ENCODE measurements at regions of chr10 and their contacts with region 1.

Region 1: GRCh38 chr10:73772280-73773151 is 9.3 kb upstream of the CHCHD1 start:
- DNase-seq: peak; percentile 61 to 95 (median 76)
- ATAC-seq: peak; percentile 71
- H3K4me3 ChIP-seq: peak overlapping the region; percentile 90
- H3K4me3 Mint-ChIP-seq: peak overlapping the region; percentile 96
- H3K27ac ChIP-seq: peak overlapping the region; percentile 91 to 92
- H3K27ac Mint-ChIP-seq: peak overlapping the region; percentile 97
- H3K4me1 ChIP-seq: peaks cover 49% of the 10 kb centered on the region
- H3K4me1 Mint-ChIP-seq: peaks cover 74% of the 10 kb centered on the region
- H3K27me3 ChIP-seq: no peaks in the 10 kb centered on the region
- H3K27me3 Mint-ChIP-seq: no peaks in the 10 kb centered on the region
- CTCF ChIP-seq: no peak

Region 2: DNA sequence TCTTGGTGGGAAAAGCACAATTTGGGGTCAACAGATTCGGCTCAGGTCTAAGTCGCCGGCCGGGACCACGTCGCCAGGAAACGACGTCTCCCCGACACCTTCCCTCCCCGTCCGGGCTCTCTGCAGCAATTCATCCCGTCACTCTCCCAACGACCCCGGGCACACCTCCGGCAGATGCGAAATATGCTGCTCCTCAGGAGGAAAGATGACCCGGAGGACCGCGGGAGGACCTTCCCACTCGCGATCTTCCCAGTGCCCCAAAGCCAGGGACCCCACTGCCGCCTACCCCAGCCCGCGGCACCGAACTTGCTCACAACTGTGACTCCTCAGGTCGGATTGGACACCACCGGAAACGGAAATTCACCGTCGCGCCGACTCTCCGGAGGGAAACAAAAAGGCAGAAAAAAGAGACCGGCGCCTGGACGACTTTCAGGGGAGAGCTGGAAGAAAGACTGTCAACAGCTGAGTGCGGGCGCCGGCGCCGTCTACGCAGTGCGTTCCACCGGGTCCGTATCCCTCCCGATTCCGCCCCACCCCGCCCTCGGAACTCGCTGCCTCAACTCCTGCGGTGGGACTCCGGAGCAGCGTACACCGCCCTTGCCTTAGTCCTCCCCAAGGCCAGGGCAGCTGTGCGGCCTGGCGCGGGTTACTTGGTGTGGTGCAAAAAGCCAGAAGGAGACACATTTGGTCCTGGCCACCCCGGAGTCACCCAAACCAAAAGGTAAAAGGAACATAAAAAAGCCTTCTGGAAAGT is 42.2 kb before region 1 on chr10:
- CTCF ChIA-PET with region 1: interaction called, 3 read pairs
- POLR2A ChIA-PET with region 1: interaction called, 33 read pairs
- intact Hi-C with region 1: no loop called
- DNase-seq: peak; percentile 78 to 94 (median 90)
- ATAC-seq: peak; percentile 90
- H3K4me3 ChIP-seq: peak overlapping the region; percentile 87
- H3K4me3 Mint-ChIP-seq: peak overlapping the region; percentile 98
- H3K27ac ChIP-seq: peak overlapping the region; percentile 77 to 86
- H3K27ac Mint-ChIP-seq: peak overlapping the region; percentile 94
- H3K4me1 ChIP-seq: peaks cover 27% of the 10 kb centered on the region
- H3K4me1 Mint-ChIP-seq: peaks cover 31% of the 10 kb centered on the region
- H3K27me3 ChIP-seq: no peaks in the 10 kb centered on the region
- H3K27me3 Mint-ChIP-seq: no peaks in the 10 kb centered on the region
- CTCF ChIP-seq: no peak

Region 3: GRCh38 chr10:73759512-73760115 is 12.9 kb before region 1 on chr10:
- CTCF ChIA-PET with region 1: interaction called, 18 read pairs
- POLR2A ChIA-PET with region 1: interaction called, 11 read pairs
- intact Hi-C with region 1: no loop called
- DNase-seq: peak in 13 of 14 experiments; percentile 23 to 89 (median 43)
- ATAC-seq: peak; percentile 87
- H3K4me3 ChIP-seq: no peak overlapping the region
- H3K4me3 Mint-ChIP-seq: peak overlapping the region; percentile 58
- H3K27ac ChIP-seq: peak overlapping the region; percentile 56 to 65
- H3K27ac Mint-ChIP-seq: peak overlapping the region; percentile 89
- H3K4me1 ChIP-seq: peaks cover 33% of the 10 kb centered on the region
- H3K4me1 Mint-ChIP-seq: peaks cover 34% of the 10 kb centered on the region
- H3K27me3 ChIP-seq: no peaks in the 10 kb centered on the region
- H3K27me3 Mint-ChIP-seq: no peaks in the 10 kb centered on the region
- CTCF ChIP-seq: no peak

Region 4: DNA sequence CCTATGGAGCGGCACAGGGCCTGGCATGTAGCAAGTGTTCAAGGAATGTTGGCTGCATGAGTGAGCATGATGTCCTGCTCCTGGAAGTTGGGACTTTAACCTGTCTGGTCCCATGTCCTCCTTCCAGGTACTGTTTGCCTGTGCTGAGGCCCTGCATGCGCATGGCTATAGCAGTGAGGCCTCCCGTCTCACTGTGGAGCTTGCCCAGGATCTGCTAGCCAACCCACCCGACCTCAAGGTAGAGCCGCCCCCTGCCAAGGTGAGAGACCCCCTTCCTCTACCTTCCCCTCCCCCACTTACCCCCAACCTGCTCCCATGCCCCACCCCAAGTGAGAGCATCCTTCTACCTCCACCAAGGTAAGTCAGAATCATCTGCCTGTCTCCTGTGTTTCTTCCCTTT is 20.9 kb after region 1 on chr10:
- CTCF ChIA-PET with region 1: no interaction called
- POLR2A ChIA-PET with region 1: interaction called, 244 read pairs
- intact Hi-C with region 1: no loop called
- DNase-seq: no peak
- ATAC-seq: no peak
- H3K4me3 ChIP-seq: no peak overlapping the region
- H3K4me3 Mint-ChIP-seq: no peak overlapping the region
- H3K27ac ChIP-seq: no peak overlapping the region
- H3K27ac Mint-ChIP-seq: peak overlapping the region; percentile 47
- H3K4me1 ChIP-seq: peaks cover 2% of the 10 kb centered on the region
- H3K4me1 Mint-ChIP-seq: no peaks in the 10 kb centered on the region
- H3K27me3 ChIP-seq: no peaks in the 10 kb centered on the region
- H3K27me3 Mint-ChIP-seq: no peaks in the 10 kb centered on the region
- CTCF ChIP-seq: no peak

Region 5: GRCh38 chr10:75210282-75211006 is 1437.9 kb after region 1 on chr10 and contains the start of gene VDAC2:
- CTCF ChIA-PET with region 1: no interaction called
- POLR2A ChIA-PET with region 1: interaction called, 6 read pairs
- intact Hi-C with region 1: loop called in 1 of 2 experiments (anchors 5 kb)
- DNase-seq: peak; percentile 91 to 98 (median 94)
- ATAC-seq: peak; percentile 81
- H3K4me3 ChIP-seq: peak within 1 kb of the TSS; percentile 73
- H3K4me3 Mint-ChIP-seq: peak within 1 kb of the TSS; percentile 97
- H3K27ac ChIP-seq: peak within 1 kb of the TSS; percentile 99
- H3K27ac Mint-ChIP-seq: peak within 1 kb of the TSS; percentile 99
- H3K4me1 ChIP-seq: peaks cover 28% of the 10 kb centered on the region
- H3K4me1 Mint-ChIP-seq: peaks cover 28% of the 10 kb centered on the region
- H3K27me3 ChIP-seq: no peaks in the 10 kb centered on the region
- H3K27me3 Mint-ChIP-seq: no peaks in the 10 kb centered on the region
- CTCF ChIP-seq: no peak
- total RNA-seq, gene VDAC2: 141 to 147 TPM

Measured in CD4-positive, alpha-beta T cell (primary cell).